Heart right ventricle (tissue), 16 donors: ENCODE measurements at regions of chr12 and their contacts with region 1.

Region 1: GRCh38 chr12:96985480-96986362 is 78.7 kb downstream of the NEDD1 start:
- DNase-seq: peak in 1 of 2 donors; percentile 14
- ATAC-seq: peak in 3 of 8 donors; percentile 49 to 68 (median 58)
- H3K4me3 ChIP-seq: peak overlapping the region; percentile 10 to 56 (median 44)
- H3K27ac ChIP-seq: no peak overlapping the region
- H3K4me1 ChIP-seq: peaks cover 0 to 8% (median 6%) of the 10 kb centered on the region in 9 donors
- H3K27me3 ChIP-seq: peaks cover 0 to 47% (median 21%) of the 10 kb centered on the region in 7 donors
- CTCF ChIP-seq: peak; percentile 54 to 89 (median 80)

Region 2: GRCh38 chr12:96578526-96579125 is 407.1 kb before region 1 on chr12:
- intact Hi-C with region 1: loop called in 7 of 10 experiments (anchors 5 to 10 kb)
- DNase-seq: peak in 1 of 2 donors; percentile 6
- ATAC-seq: peak in 1 of 8 donors; percentile 58
- H3K4me3 ChIP-seq: no peak overlapping the region
- H3K27ac ChIP-seq: no peak overlapping the region
- H3K4me1 ChIP-seq: peaks cover 0 to 6% (median 0%) of the 10 kb centered on the region in 9 donors
- H3K27me3 ChIP-seq: peaks cover 0 to 4% (median 0%) of the 10 kb centered on the region in 7 donors
- CTCF ChIP-seq: peak; percentile 21 to 76 (median 65)

Region 3: GRCh38 chr12:96587691-96588090 is 398.0 kb before region 1 on chr12:
- intact Hi-C with region 1: loop called in 3 of 10 experiments (anchors 5 to 10 kb)
- DNase-seq: no peak
- ATAC-seq: no peak
- H3K4me3 ChIP-seq: no peak overlapping the region
- H3K27ac ChIP-seq: no peak overlapping the region
- H3K4me1 ChIP-seq: no peaks in the 10 kb centered on the region
- H3K27me3 ChIP-seq: no peaks in the 10 kb centered on the region
- CTCF ChIP-seq: no peak

Region 4: DNA sequence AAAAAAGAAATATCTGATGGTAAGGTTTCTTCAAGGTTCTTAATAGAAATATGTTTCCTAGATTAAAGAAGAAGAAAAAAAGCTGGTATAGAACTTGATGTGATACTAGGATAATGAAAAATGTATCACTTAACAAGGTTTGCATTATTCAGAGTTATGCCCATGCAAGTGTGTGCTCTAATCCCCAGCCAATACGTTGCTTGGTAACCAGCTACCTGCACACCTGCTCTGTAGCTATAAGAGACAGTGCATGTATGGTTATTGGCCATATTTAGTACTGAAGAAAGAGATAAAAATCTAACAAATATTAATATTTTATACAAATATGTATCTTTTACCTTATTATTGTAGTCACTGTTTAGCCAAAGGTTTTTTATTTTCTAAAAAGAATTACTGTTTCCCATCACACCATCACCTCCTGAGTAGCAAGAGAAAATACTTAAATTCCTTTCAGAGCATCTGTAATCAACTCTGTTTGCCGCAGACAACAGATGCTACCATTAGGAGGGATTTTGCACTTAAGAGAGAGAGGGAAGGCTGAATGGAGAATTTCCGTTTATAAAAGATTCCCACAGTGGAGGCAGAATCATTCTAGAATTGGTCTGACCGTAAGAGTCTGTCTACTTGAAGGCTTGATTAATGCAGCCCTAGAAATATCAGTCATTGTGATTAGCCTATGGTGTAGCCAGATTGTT is 37.0 kb after region 1 on chr12:
- intact Hi-C with region 1: no loop called
- DNase-seq: no peak
- ATAC-seq: no peak
- H3K4me3 ChIP-seq: no peak overlapping the region
- H3K27ac ChIP-seq: no peak overlapping the region
- H3K4me1 ChIP-seq: no peaks in the 10 kb centered on the region
- H3K27me3 ChIP-seq: peaks cover 0 to 4% (median 0%) of the 10 kb centered on the region in 7 donors
- CTCF ChIP-seq: no peak

Region 5: GRCh38 chr12:97048421-97049035 is 62.8 kb after region 1 on chr12:
- intact Hi-C with region 1: no loop called
- DNase-seq: no peak
- ATAC-seq: peak in 2 of 8 donors; percentile 61
- H3K4me3 ChIP-seq: no peak overlapping the region
- H3K27ac ChIP-seq: peak overlapping the region in 1 of 10 donors; percentile 34
- H3K4me1 ChIP-seq: no peaks in the 10 kb centered on the region
- H3K27me3 ChIP-seq: no peaks in the 10 kb centered on the region
- CTCF ChIP-seq: no peak

Region 6: DNA sequence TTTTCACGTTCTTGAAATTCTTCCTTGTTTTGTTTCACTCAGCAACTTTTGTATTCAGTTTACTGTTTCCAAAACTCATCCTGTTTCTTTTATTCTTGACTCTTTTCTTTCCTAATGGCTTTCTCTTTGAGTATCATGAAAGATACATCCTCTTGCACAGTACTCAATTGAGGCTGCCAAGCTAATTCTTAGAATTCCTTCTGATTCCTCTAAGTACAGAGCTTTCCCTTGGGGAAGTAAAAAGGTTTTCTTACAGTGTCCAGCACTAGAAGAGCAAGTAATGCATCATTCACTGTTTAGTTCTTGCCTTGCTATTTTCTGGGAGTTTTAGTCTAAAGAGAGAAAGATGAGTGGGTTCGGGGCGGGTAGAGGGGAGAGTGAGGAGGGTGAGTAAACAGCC is 75.5 kb after region 1 on chr12:
- intact Hi-C with region 1: no loop called
- DNase-seq: no peak
- ATAC-seq: no peak
- H3K4me3 ChIP-seq: no peak overlapping the region
- H3K27ac ChIP-seq: no peak overlapping the region
- H3K4me1 ChIP-seq: no peaks in the 10 kb centered on the region
- H3K27me3 ChIP-seq: no peaks in the 10 kb centered on the region
- CTCF ChIP-seq: no peak

Region 7: GRCh38 chr12:97308576-97309198 is 323.0 kb after region 1 on chr12:
- intact Hi-C with region 1: loop called in 8 of 10 experiments (anchors 2 to 10 kb)
- DNase-seq: peak in 1 of 2 donors; percentile 20
- ATAC-seq: no peak
- H3K4me3 ChIP-seq: no peak overlapping the region
- H3K27ac ChIP-seq: no peak overlapping the region
- H3K4me1 ChIP-seq: peaks cover 0 to 6% (median 0%) of the 10 kb centered on the region in 9 donors
- H3K27me3 ChIP-seq: peaks cover 0 to 10% (median 0%) of the 10 kb centered on the region in 7 donors
- CTCF ChIP-seq: peak; percentile 52 to 87 (median 77)

Region 8: GRCh38 chr12:98373025-98373554 is 1387.4 kb after region 1 on chr12:
- intact Hi-C with region 1: loop called in 1 of 10 experiments (anchors 5 kb)
- DNase-seq: no peak
- ATAC-seq: no peak
- H3K4me3 ChIP-seq: no peak overlapping the region
- H3K27ac ChIP-seq: no peak overlapping the region
- H3K4me1 ChIP-seq: peaks cover 0 to 19% (median 0%) of the 10 kb centered on the region in 9 donors
- H3K27me3 ChIP-seq: peaks cover 0 to 14% (median 0%) of the 10 kb centered on the region in 7 donors
- CTCF ChIP-seq: peak in 8 of 9 donors; percentile 25 to 72 (median 56)

Region 9: GRCh38 chr12:98397316-98398105 is 1411.8 kb after region 1 on chr12:
- intact Hi-C with region 1: loop called in 2 of 10 experiments (anchors 5 to 10 kb)
- DNase-seq: peak; percentile 79 to 80
- ATAC-seq: peak; percentile 93 to 98 (median 95)
- H3K4me3 ChIP-seq: peak overlapping the region in 8 of 10 donors; percentile 0 to 63 (median 45)
- H3K27ac ChIP-seq: peak overlapping the region in 2 of 10 donors; percentile 19 to 54
- H3K4me1 ChIP-seq: peaks cover 0 to 39% (median 7%) of the 10 kb centered on the region in 9 donors
- H3K27me3 ChIP-seq: no peaks in the 10 kb centered on the region
- CTCF ChIP-seq: peak; percentile 88 to 96 (median 94)

Region 10: DNA sequence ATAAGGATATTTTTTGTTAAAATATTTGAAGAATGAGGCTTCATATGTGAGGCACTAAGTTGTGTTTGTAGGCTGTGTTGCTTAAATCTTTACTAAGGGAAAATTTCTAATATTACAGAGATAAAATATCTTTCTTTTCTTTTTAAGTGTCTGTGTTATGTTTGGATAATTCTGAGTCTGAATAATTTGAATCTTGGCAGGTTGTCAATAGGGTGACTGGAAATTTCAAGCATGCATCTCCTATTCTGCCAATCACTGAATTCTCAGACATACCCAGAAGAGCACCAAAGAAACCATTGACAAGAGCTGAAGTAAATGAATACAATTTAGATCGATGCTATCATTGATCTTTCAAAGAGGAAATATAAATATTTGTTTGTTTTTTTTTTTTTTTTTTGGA is 1559.0 kb after region 1 on chr12:
- intact Hi-C with region 1: loop called in 1 of 10 experiments (anchors 10 kb)
- DNase-seq: no peak
- ATAC-seq: no peak
- H3K4me3 ChIP-seq: no peak overlapping the region
- H3K27ac ChIP-seq: no peak overlapping the region
- H3K4me1 ChIP-seq: no peaks in the 10 kb centered on the region
- H3K27me3 ChIP-seq: no peaks in the 10 kb centered on the region
- CTCF ChIP-seq: no peak